Activated B cell treated with CpG ODN at 0.5 μM for 24 hours (primary cell): ENCODE measurements at regions of chr10 and their contacts with region 1.

Region 1: GRCh38 chr10:74432841-74433594 is 282.0 kb downstream of the ADK start:
- DNase-seq: no peak
- ATAC-seq: no peak
- H3K4me3 Mint-ChIP-seq: no peak overlapping the region
- H3K27ac Mint-ChIP-seq: no peak overlapping the region
- H3K4me1 Mint-ChIP-seq: no peaks in the 10 kb centered on the region
- H3K27me3 Mint-ChIP-seq: no peaks in the 10 kb centered on the region
- CTCF ChIP-seq: no peak

Region 2: GRCh38 chr10:74445493-74445892 is 12.5 kb after region 1 on chr10:
- CTCF ChIA-PET with region 1: no interaction called
- POLR2A ChIA-PET with region 1: no interaction called
- intact Hi-C with region 1: loop called (anchors 2 kb)
- DNase-seq: no peak
- ATAC-seq: no peak
- H3K4me3 Mint-ChIP-seq: no peak overlapping the region
- H3K27ac Mint-ChIP-seq: no peak overlapping the region
- H3K4me1 Mint-ChIP-seq: peaks cover 8% of the 10 kb centered on the region
- H3K27me3 Mint-ChIP-seq: no peaks in the 10 kb centered on the region
- CTCF ChIP-seq: no peak

Region 3: DNA sequence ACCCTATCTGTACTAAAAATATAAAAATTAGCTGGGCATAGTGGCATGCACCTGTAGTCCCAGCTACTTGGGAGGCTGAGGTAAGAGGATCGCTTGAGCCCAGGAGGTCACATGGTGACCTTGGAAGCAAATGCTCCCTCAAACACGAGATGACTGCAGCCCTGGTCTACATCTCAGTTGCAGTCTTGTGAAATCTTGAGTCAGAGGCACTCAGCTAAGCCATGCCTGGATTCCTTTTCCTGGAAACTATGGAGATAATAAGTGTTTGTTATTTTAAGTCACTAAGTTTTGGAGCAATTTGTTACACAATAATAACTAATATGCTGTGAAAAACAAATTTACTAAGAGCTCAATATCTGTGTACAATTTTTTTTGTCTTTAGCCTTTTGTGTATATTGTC is 109.0 kb after region 1 on chr10:
- CTCF ChIA-PET with region 1: no interaction called
- POLR2A ChIA-PET with region 1: no interaction called
- intact Hi-C with region 1: no loop called
- DNase-seq: no peak
- ATAC-seq: no peak
- H3K4me3 Mint-ChIP-seq: no peak overlapping the region
- H3K27ac Mint-ChIP-seq: no peak overlapping the region
- H3K4me1 Mint-ChIP-seq: peaks cover 2% of the 10 kb centered on the region
- H3K27me3 Mint-ChIP-seq: no peaks in the 10 kb centered on the region
- CTCF ChIP-seq: no peak